ENCODE measurements at regions of chr1 and their contacts with region 1.

Region 1: GRCh38 chr1:101645810-101646209 is 350.9 kb downstream of the OLFM3 start:
- DNase-seq: no peak
- H3K4me3 ChIP-seq: no peak overlapping the region
- H3K27ac ChIP-seq: no peak overlapping the region
- H3K4me1 ChIP-seq: no peaks in the 10 kb centered on the region
- H3K27me3 ChIP-seq: no peaks in the 10 kb centered on the region
- CTCF ChIP-seq: no peak

Region 2: DNA sequence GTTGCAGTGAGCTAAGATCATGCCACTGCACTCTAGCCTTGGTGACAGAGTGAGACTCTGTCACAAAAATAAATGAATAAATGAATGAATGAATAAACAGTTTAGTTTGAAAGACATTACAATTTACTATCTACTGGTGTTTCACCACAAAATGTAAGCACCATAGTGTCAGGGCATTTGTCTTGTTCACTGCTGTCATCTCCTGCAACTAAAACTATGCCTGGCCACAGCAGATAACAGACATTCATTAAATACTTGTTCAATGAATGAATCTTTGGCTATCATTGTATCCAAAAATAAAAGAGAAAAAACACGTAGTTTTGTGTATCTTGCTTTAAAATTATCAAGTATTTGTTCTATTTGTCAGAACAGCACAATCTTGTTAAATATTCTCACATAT is 1545.6 kb before region 1 on chr1:
- intact Hi-C with region 1: loop called (anchors 10 kb)
- DNase-seq: no peak
- H3K4me3 ChIP-seq: no peak overlapping the region
- H3K27ac ChIP-seq: no peak overlapping the region
- H3K4me1 ChIP-seq: no peaks in the 10 kb centered on the region
- H3K27me3 ChIP-seq: no peaks in the 10 kb centered on the region
- CTCF ChIP-seq: no peak

Region 3: DNA sequence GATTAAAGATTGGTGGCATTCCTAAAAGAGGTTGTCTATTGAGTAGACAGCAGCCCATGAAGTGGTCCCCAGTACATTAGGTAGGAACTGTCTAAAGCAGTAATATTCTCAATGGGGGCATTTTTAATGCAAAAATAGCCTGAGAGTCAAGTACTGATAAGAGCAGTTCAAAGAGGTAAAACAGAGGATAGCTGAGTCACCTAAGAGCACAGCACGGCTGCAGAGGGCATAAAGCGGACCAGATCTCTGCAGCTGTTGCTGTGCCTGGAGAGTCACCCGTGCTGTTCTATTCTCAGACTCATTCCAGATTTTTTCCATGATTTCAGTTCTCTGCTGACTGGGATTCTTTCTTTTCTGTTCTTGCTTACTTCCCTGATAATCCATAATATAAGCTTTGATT is 37.8 kb after region 1 on chr1:
- intact Hi-C with region 1: no loop called
- DNase-seq: no peak
- H3K4me3 ChIP-seq: no peak overlapping the region
- H3K27ac ChIP-seq: no peak overlapping the region
- H3K4me1 ChIP-seq: no peaks in the 10 kb centered on the region
- H3K27me3 ChIP-seq: no peaks in the 10 kb centered on the region
- CTCF ChIP-seq: no peak

Measured in ascending aorta (tissue), 2 donors.